Gastrocnemius medialis (tissue), 4 donors: ENCODE measurements at regions of chr14 and their contacts with region 1.

Region 1: DNA sequence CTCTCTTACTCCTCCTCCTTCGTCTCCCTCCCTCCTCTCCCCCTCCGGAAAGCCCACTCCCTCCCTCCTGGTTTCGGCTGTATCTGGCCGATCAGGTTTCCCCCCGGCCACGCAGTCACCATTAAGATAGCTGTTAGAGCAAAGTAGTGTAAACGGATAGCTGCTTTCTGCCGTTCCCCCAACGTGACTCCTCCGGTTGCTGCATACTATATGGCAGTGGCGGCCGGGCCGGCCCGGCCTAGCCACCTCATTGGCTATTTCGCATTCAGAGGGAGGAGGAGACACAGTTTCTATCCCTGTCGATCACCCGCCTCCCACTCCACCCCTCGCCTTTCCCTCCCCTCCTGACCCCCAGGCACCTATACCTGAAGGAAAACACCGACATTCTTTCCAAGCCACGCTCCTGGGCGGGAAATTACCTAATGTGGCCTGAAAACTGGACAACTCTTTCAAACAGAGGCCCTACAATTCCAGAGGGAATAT is at the start of gene SIX4:
- DNase-seq: peak; percentile 86 to 93
- ATAC-seq: peak; percentile 80 to 81
- H3K4me3 ChIP-seq: peak within 1 kb of the TSS; percentile 75 to 98 (median 88)
- H3K27ac ChIP-seq: peak within 1 kb of the TSS; percentile 89 to 99 (median 97)
- H3K4me1 ChIP-seq: peaks cover 23 to 27% of the 10 kb centered on the region in 2 donors
- H3K27me3 ChIP-seq: no peaks in the 10 kb centered on the region
- CTCF ChIP-seq: no peak
- POLR2A ChIP-seq: peak; percentile 84 to 87
- total RNA-seq, gene SIX4: 27.8 to 62.6 (median 46.1) TPM

Region 2: DNA sequence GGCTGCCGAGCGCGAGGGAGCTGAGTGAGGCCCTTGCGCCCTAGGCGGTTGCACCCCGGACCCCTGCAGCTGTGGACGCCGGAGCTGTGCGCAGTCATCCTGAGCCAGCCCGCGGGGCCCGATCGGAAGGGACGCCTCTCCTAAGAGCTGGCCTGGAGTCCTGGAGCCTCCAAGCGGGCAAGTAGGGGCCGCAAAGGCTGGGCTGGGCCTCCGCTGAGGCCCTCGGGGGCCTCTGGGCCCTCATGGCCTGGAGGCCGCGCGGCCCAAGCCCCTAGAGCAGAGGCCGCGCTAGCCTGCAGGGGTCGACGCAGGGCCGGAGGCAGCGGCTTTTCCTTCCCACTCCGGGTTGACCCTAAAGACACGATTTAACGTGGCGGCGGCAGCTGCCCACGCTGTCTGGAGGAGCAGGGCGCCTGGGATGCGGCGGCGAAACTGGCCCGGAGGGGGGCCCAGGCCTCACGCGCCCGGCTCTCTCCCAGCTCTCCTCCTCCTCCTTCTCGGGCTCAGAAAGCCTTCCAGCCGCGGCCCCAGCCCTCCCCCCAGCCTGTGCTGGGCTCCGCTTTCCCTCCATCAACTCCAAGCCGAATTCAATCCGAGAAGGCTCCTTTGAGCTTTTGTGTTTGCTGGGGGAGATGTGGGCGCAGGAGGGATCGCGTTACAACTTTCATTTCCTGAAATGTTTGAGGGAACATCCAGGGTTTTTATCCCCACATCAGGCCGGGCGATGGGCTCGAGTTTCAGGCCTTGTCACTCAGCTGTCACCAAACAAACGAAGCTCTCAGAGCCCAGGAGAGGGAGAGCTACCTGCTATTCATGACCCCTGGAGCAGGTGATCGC is 86.5 kb before region 1 on chr14:
- in situ Hi-C with region 1: loop called in 1 of 4 experiments (anchors 10 kb)
- intact Hi-C with region 1: no loop called
- DNase-seq: peak in 1 of 2 donors; percentile 40
- ATAC-seq: peak; percentile 37 to 48
- H3K4me3 ChIP-seq: peak overlapping the region; percentile 57 to 69 (median 62)
- H3K27ac ChIP-seq: peak overlapping the region; percentile 93 to 98 (median 95)
- H3K4me1 ChIP-seq: peaks cover 44 to 52% of the 10 kb centered on the region in 2 donors
- H3K27me3 ChIP-seq: no peaks in the 10 kb centered on the region
- CTCF ChIP-seq: peak in 1 of 5 experiments; percentile 13
- POLR2A ChIP-seq: no peak

Region 3: DNA sequence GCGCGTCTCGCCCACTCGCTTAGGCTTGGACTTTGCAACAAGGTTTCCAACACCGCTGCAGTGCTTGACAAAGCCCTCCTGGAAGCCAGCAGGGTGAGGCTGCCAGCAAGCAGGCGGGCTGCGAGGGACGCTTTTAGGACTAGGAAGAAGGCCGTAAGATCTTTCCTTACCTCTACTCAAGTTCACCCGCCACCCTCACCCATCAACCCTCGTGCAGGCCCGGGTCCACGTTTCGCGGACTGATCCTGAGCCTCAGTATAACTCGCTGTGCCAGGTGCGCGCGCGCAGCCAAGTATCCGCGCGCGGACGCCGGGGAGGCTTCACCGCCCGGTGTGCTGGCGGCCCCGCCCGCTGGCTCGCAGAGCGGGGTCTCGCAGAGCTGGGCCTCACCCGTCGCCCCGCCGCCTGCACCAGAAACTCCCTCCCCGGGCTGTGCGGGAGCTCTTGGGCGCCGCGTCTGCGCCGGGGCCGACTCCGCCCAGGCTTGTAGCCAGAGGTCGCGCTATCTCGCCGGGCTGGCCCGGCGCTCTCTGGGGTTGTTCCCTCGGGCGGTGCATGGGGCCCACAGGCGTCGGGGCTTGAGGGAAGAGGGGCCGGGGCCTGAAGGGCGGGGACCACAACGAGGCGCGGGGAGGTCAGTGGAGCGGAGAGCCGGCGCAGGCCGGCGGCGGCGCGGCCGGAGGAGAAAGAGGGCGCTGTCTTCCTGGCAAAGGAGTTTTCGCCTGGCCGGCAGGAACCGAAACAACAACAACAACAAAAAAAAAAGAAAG is 67.3 kb before region 1 on chr14:
- in situ Hi-C with region 1: loop called in 3 of 4 experiments (anchors 5 to 10 kb)
- intact Hi-C with region 1: loop called (anchors 2 kb)
- DNase-seq: peak; percentile 67 to 88
- ATAC-seq: peak; percentile 58 to 59
- H3K4me3 ChIP-seq: peak overlapping the region; percentile 73 to 90 (median 84)
- H3K27ac ChIP-seq: peak overlapping the region; percentile 93 to 98 (median 95)
- H3K4me1 ChIP-seq: peaks cover 26 to 34% of the 10 kb centered on the region in 2 donors
- H3K27me3 ChIP-seq: no peaks in the 10 kb centered on the region
- CTCF ChIP-seq: peak in 4 of 5 experiments; percentile 20 to 70 (median 49)
- POLR2A ChIP-seq: peak; percentile 33 to 50

Region 4: GRCh38 chr14:60753264-60754119 is 29.3 kb after region 1 on chr14:
- in situ Hi-C with region 1: no loop called
- intact Hi-C with region 1: no loop called
- DNase-seq: no peak
- ATAC-seq: no peak
- H3K4me3 ChIP-seq: no peak overlapping the region
- H3K27ac ChIP-seq: peak overlapping the region in 2 of 4 donors; percentile 4 to 25
- H3K4me1 ChIP-seq: peaks cover 28 to 46% of the 10 kb centered on the region in 2 donors
- H3K27me3 ChIP-seq: no peaks in the 10 kb centered on the region
- CTCF ChIP-seq: no peak
- POLR2A ChIP-seq: no peak

Region 5: GRCh38 chr14:60805841-60806569 is 81.8 kb after region 1 on chr14:
- in situ Hi-C with region 1: no loop called
- intact Hi-C with region 1: loop called (anchors 5 kb)
- DNase-seq: no peak
- ATAC-seq: no peak
- H3K4me3 ChIP-seq: no peak overlapping the region
- H3K27ac ChIP-seq: peak overlapping the region; percentile 74 to 82 (median 80)
- H3K4me1 ChIP-seq: peaks cover 8 to 28% of the 10 kb centered on the region in 2 donors
- H3K27me3 ChIP-seq: no peaks in the 10 kb centered on the region
- CTCF ChIP-seq: no peak
- POLR2A ChIP-seq: no peak

Region 6: GRCh38 chr14:60980811-60981632 is 256.8 kb after region 1 on chr14 and contains the starts of genes SLC38A6 and TRMT5:
- in situ Hi-C with region 1: loop called in 2 of 4 experiments (anchors 10 kb)
- intact Hi-C with region 1: loop called (anchors 5 kb)
- DNase-seq: peak; percentile 92 to 94
- ATAC-seq: peak; percentile 86 to 92
- H3K4me3 ChIP-seq: peak within 1 kb of the TSS; percentile 69 to 90 (median 83)
- H3K27ac ChIP-seq: peak within 1 kb of the TSS; percentile 88 to 95 (median 90)
- H3K4me1 ChIP-seq: peaks cover 56 to 57% of the 10 kb centered on the region in 2 donors
- H3K27me3 ChIP-seq: no peaks in the 10 kb centered on the region
- CTCF ChIP-seq: peak in 1 of 5 experiments; percentile 30
- POLR2A ChIP-seq: peak; percentile 48 to 58
- total RNA-seq, gene SLC38A6: 4.0 to 22.6 (median 7.0) TPM
- total RNA-seq, gene TRMT5: 5.9 to 7.6 (median 6.5) TPM

Region 7: DNA sequence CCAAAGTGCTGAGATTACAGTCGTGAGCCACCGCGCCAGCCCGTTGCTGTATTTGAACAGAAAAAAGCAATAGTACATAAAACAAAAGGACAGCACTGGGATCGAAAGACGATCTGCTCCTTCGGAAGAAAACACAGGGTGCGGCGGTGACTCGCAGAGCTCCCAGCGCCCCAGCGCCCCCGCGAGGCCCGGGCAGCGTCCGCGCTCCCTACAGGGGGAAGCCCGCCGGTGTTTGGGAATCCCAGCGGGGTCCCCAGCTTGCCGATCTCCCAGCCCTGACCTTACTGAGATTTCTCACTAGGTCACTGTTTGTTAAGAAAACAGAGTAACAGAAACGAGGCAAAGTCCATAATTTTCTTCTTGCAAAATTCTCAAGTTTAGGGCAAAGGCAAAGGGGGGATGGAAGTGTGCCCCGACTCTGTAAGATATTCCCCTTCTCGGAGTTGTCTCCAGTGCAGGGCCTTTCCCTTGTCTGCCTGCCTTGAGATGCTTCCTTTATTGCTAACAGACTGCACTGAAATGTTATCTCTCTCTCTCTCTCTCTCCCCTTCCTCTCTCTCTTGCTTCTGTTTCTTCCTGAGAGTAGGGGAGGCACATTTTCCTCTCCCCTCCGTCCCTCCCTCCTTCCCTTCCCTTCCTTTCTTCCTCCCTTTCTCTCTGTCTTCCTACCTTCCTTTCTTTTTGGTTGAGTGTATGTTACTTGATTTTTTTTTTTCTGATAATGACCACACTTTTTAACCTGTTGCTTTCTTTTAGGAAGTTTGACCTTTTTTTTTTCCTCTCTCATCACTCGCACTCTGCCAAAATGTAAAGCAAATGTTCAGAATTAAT is 465.0 kb after region 1 on chr14:
- in situ Hi-C with region 1: loop called in 1 of 4 experiments (anchors 10 kb)
- intact Hi-C with region 1: loop called (anchors 5 kb)
- DNase-seq: peak; percentile 64 to 78
- ATAC-seq: peak; percentile 67 to 75
- H3K4me3 ChIP-seq: peak overlapping the region; percentile 47 to 64 (median 58)
- H3K27ac ChIP-seq: peak overlapping the region; percentile 79 to 94 (median 91)
- H3K4me1 ChIP-seq: peaks cover 39 to 55% of the 10 kb centered on the region in 2 donors
- H3K27me3 ChIP-seq: no peaks in the 10 kb centered on the region
- CTCF ChIP-seq: peak in 4 of 5 experiments; percentile 51 to 73 (median 70)
- POLR2A ChIP-seq: peak in 1 of 2 donors; percentile 8

Region 8: DNA sequence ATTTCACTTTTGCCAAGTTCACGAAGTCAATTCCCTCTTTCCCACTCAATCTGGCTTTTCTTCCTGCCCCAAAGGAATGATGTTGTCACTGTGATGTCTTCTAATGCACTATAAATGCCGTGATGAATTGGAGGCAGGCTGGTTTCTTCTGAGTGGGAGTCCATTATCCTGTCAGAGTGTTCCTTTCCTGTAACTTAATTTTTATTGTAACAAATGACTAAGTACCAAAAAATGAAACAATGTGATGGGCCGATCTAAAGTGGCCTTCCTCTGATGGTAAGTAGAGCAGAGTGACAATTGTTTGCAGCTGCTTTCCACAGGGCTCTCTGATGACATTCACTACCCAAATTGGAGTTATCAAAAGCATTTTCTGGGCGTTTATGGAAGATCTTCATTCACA is 534.8 kb after region 1 on chr14:
- in situ Hi-C with region 1: no loop called
- intact Hi-C with region 1: loop called (anchors 5 kb)
- DNase-seq: no peak
- ATAC-seq: no peak
- H3K4me3 ChIP-seq: no peak overlapping the region
- H3K27ac ChIP-seq: peak overlapping the region; percentile 80 to 85 (median 84)
- H3K4me1 ChIP-seq: peaks cover 10 to 32% of the 10 kb centered on the region in 2 donors
- H3K27me3 ChIP-seq: no peaks in the 10 kb centered on the region
- CTCF ChIP-seq: no peak
- POLR2A ChIP-seq: no peak